Psoas muscle (tissue), 8 donors: ENCODE measurements at regions of chr7 and their contacts with region 1.

Region 1: GRCh38 chr7:135616136-135616535 is 46.2 kb upstream of the STMP1 start:
- DNase-seq: no peak
- ATAC-seq: no peak
- H3K4me3 ChIP-seq: no peak overlapping the region
- H3K27ac ChIP-seq: no peak overlapping the region
- H3K4me1 ChIP-seq: no peaks in the 10 kb centered on the region
- H3K27me3 ChIP-seq: no peaks in the 10 kb centered on the region
- CTCF ChIP-seq: no peak

Region 2: GRCh38 chr7:135575296-135575695 is 40.8 kb before region 1 on chr7:
- intact Hi-C with region 1: loop called in 1 of 2 experiments (anchors 5 kb)
- DNase-seq: no peak
- ATAC-seq: no peak
- H3K4me3 ChIP-seq: no peak overlapping the region
- H3K27ac ChIP-seq: no peak overlapping the region
- H3K4me1 ChIP-seq: no peaks in the 10 kb centered on the region
- H3K27me3 ChIP-seq: no peaks in the 10 kb centered on the region
- CTCF ChIP-seq: no peak

Region 3: GRCh38 chr7:135672560-135673359 is 56.6 kb after region 1 on chr7:
- intact Hi-C with region 1: no loop called
- DNase-seq: no peak
- ATAC-seq: peak; percentile 68 to 78 (median 72)
- H3K4me3 ChIP-seq: no peak overlapping the region
- H3K27ac ChIP-seq: peak overlapping the region; percentile 59
- H3K4me1 ChIP-seq: peaks cover 77% of the 10 kb centered on the region
- H3K27me3 ChIP-seq: no peaks in the 10 kb centered on the region
- CTCF ChIP-seq: peak; percentile 78

Region 4: DNA sequence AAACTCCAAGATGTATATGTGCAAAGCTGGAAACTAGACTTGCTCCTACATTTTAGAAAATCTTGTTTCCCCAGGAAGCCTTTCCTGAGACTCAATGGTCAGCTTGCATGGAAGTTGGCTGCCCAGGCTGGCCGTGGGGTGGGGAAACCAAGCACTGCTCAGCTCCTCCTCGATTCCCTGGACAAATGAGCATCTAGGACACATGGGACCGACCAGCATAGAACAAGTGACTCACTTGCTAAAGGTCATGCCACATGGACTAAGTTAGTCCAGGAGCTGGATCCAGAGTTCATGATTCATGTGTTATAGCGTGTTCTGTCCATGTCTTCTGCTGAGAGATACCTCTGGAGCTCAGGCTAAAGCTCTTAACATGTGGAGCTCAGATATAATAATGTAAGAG is 126.2 kb after region 1 on chr7:
- intact Hi-C with region 1: no loop called
- DNase-seq: no peak
- ATAC-seq: peak in 2 of 4 donors; percentile 39 to 53
- H3K4me3 ChIP-seq: no peak overlapping the region
- H3K27ac ChIP-seq: no peak overlapping the region
- H3K4me1 ChIP-seq: no peaks in the 10 kb centered on the region
- H3K27me3 ChIP-seq: no peaks in the 10 kb centered on the region
- CTCF ChIP-seq: no peak

Region 5: GRCh38 chr7:135911099-135911498 is 295.0 kb after region 1 on chr7:
- intact Hi-C with region 1: no loop called
- DNase-seq: no peak
- ATAC-seq: no peak
- H3K4me3 ChIP-seq: no peak overlapping the region
- H3K27ac ChIP-seq: no peak overlapping the region
- H3K4me1 ChIP-seq: no peaks in the 10 kb centered on the region
- H3K27me3 ChIP-seq: no peaks in the 10 kb centered on the region
- CTCF ChIP-seq: no peak